Ascending aorta (tissue), 2 donors: ENCODE measurements at regions of chr12 and their contacts with region 1.

Region 1: DNA sequence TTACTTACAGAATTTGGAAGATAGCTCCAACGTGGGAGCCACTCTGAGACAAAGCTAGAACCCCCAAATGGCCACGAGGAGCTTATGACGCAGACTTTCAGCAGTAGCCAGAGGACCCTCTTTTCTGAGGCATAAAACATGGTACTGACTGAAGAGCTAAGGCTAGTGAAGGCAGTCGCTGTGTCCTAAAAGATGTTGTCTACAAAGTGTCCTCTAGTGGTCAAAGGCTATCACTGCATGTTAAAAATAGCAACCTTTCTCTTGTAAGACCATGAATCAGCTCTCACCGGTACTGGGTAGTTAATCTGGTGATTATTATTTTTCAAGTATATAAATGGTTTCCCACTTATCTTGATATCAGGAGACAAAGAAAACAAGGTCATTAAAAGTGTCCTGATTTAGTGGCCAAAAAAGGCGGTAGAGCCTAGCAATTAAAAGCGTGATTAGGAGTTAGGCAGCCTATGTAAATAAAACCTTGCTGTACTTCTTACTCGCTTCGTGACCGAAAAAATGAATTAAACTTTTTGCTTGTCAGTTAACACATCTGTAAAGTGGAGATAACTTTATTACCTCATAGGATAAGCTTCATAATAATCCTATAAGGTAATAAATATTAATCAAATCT is 47.0 kb upstream of the LGR5 start:
- DNase-seq: no peak
- H3K4me3 ChIP-seq: no peak overlapping the region
- H3K27ac ChIP-seq: no peak overlapping the region
- H3K4me1 ChIP-seq: peaks cover 0 to 4% of the 10 kb centered on the region in 2 donors
- H3K27me3 ChIP-seq: no peaks in the 10 kb centered on the region
- CTCF ChIP-seq: peak; percentile 37 to 74 (median 71)

Region 2: DNA sequence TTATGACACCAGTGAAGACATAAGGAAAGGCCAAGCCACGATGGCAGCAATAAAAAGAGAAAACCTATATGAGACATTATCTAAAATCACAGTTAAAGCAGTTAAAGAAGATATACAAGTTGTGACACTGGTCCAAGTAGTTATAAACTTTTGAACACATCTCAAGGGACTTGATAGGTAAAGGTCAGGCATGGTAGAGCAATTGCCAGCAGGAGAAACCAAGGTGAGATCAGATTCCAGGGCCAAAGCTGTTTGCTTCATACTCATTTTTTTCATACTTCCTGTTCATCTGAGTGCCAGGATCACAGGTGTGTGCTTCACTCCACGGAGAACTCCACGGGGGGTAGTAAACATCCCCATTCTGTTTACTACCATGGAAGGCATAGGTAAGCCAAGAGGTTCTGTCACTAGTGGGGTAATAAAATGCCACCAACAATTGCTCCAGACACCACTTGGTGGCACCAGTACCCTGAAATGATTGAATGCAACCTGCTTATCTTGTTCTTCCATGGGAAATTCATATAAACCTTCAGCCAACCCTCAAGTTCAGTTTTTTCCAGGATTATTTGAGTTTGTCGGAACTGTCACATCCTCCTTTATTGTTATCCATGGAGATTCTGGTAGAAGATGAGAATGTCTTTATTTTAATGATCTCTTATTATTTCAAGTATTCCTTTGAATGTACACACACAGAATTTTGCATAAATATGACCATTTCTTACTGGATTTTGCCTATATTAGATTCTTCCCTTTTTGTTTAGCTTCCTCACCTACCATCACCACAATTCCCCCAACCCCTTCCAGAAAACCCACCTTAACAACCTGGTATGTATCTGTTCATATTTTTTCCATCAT is 175.7 kb before region 1 on chr12:
- intact Hi-C with region 1: loop called (anchors 1 kb)
- DNase-seq: peak in 1 of 2 donors; percentile 68
- H3K4me3 ChIP-seq: no peak overlapping the region
- H3K27ac ChIP-seq: no peak overlapping the region
- H3K4me1 ChIP-seq: peaks cover 0 to 2% of the 10 kb centered on the region in 2 donors
- H3K27me3 ChIP-seq: no peaks in the 10 kb centered on the region
- CTCF ChIP-seq: peak; percentile 32 to 55 (median 45)

Region 3: GRCh38 chr12:71610031-71610795 is 217.6 kb after region 1 on chr12:
- intact Hi-C with region 1: no loop called
- DNase-seq: no peak
- H3K4me3 ChIP-seq: no peak overlapping the region
- H3K27ac ChIP-seq: no peak overlapping the region
- H3K4me1 ChIP-seq: no peaks in the 10 kb centered on the region
- H3K27me3 ChIP-seq: no peaks in the 10 kb centered on the region
- CTCF ChIP-seq: no peak